ENCODE measurements at regions of chr3 and their contacts with region 1.

Region 1: DNA sequence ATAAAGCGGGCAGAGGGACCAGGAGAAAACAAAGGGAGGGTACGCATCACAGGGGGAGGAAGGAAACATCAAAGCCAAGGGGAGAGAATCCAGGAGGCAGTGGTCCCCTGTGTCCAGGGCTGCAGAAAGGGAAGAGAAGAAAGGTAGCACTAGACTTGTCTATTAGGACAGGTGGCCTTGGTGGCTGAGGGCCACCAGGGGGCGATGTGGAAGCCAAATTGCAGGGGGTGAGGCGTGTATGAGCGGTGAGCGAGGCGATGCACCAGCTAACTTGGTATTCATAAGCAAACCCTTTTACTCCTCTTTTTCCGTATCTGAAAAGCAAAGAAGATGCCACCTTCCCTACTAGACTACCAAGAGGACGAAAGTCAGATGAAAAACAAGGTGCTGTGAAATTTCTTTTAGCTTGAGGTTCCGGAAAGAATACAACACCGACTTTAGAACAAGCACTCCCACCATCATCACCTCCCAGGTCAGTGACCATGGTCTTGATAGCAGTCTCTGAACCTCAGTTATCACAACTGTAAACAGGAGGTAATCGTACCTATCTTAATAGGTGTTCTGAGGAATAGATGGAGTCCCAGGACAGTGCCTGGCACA is 654.4 kb upstream of the ADAMTS9 start:
- DNase-seq: peak; percentile 60
- H3K4me3 ChIP-seq: no peak overlapping the region
- H3K27ac ChIP-seq: no peak overlapping the region
- H3K4me1 ChIP-seq: no peaks in the 10 kb centered on the region
- H3K27me3 ChIP-seq: peaks cover 0 to 2% of the 10 kb centered on the region in 2 experiments
- CTCF ChIP-seq: peak; percentile 83 to 90
- POLR2A ChIP-seq: no peak

Region 2: GRCh38 chr3:65391068-65391467 is 48.9 kb after region 1 on chr3:
- CTCF ChIA-PET with region 1: no interaction called
- POLR2A ChIA-PET with region 1: no interaction called
- dilution Hi-C with region 1: no loop called
- intact Hi-C with region 1: no loop called
- DNase-seq: no peak
- H3K4me3 ChIP-seq: no peak overlapping the region
- H3K27ac ChIP-seq: no peak overlapping the region
- H3K4me1 ChIP-seq: no peaks in the 10 kb centered on the region
- H3K27me3 ChIP-seq: no peaks in the 10 kb centered on the region
- CTCF ChIP-seq: no peak
- POLR2A ChIP-seq: no peak

Region 3: GRCh38 chr3:65412588-65412987 is 70.4 kb after region 1 on chr3:
- CTCF ChIA-PET with region 1: interaction called, 5 read pairs
- POLR2A ChIA-PET with region 1: no interaction called
- dilution Hi-C with region 1: no loop called
- intact Hi-C with region 1: loop called (anchors 1 kb)
- DNase-seq: peak; percentile 18
- H3K4me3 ChIP-seq: no peak overlapping the region
- H3K27ac ChIP-seq: no peak overlapping the region
- H3K4me1 ChIP-seq: peaks cover 28% of the 10 kb centered on the region
- H3K27me3 ChIP-seq: no peaks in the 10 kb centered on the region
- CTCF ChIP-seq: no peak
- POLR2A ChIP-seq: no peak

Region 4: GRCh38 chr3:65575373-65575840 is 233.2 kb after region 1 on chr3:
- CTCF ChIA-PET with region 1: no interaction called
- POLR2A ChIA-PET with region 1: no interaction called
- dilution Hi-C with region 1: no loop called
- intact Hi-C with region 1: no loop called
- DNase-seq: peak; percentile 12
- H3K4me3 ChIP-seq: no peak overlapping the region
- H3K27ac ChIP-seq: no peak overlapping the region
- H3K4me1 ChIP-seq: no peaks in the 10 kb centered on the region
- H3K27me3 ChIP-seq: no peaks in the 10 kb centered on the region
- CTCF ChIP-seq: no peak
- POLR2A ChIP-seq: no peak

Region 5: GRCh38 chr3:65672871-65673815 is 331.0 kb after region 1 on chr3:
- CTCF ChIA-PET with region 1: interaction called, 10 read pairs
- POLR2A ChIA-PET with region 1: no interaction called
- dilution Hi-C with region 1: no loop called
- intact Hi-C with region 1: loop called (anchors 5 kb)
- DNase-seq: peak; percentile 50
- H3K4me3 ChIP-seq: no peak overlapping the region
- H3K27ac ChIP-seq: no peak overlapping the region
- H3K4me1 ChIP-seq: no peaks in the 10 kb centered on the region
- H3K27me3 ChIP-seq: no peaks in the 10 kb centered on the region
- CTCF ChIP-seq: peak; percentile 73 to 85
- POLR2A ChIP-seq: no peak

Region 6: DNA sequence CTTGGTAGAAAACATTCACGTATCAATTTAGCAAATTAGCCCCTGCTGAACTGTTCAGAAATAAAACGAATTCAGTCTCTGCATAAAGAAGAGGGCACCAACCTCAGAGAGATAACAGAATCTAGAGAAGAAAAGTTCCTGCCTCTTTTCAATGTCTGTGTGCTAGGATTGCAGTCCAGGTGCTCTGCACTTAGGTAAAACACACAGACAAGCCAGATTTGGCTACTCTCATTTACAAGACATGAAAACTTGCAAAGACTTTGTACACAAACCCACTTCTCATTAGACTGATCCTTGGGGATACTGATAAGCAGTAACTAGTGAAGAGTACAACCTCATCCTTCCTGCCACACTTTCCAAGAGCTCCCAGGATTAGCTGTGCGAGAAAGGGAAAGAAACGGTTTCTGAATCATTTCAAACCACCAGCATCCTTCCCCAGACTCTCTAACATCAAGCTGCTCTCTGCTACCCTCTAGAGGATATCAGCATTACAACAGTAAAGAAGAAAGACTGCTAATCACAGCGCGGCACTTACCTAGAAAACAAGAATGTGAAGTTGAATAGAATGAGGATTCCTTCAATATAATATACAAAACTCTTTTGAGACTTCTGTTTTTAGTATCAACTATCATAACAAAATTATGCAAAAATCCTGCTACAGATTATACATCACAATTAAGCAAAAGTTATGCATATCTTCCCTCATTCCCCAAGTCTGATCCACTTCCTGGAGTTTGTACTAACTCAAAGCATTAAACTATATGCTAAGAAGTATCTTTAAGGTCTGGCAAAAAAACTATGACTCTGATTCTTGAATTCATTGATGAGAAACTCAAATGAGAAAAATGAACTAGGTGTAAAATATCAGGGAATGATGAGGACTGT is 390.1 kb after region 1 on chr3:
- CTCF ChIA-PET with region 1: interaction called, 8 read pairs
- POLR2A ChIA-PET with region 1: no interaction called
- dilution Hi-C with region 1: no loop called
- intact Hi-C with region 1: loop called (anchors 1 kb)
- DNase-seq: peak; percentile 73
- H3K4me3 ChIP-seq: no peak overlapping the region
- H3K27ac ChIP-seq: no peak overlapping the region
- H3K4me1 ChIP-seq: no peaks in the 10 kb centered on the region
- H3K27me3 ChIP-seq: no peaks in the 10 kb centered on the region
- CTCF ChIP-seq: peak; percentile 71 to 74
- POLR2A ChIP-seq: no peak

Region 7: DNA sequence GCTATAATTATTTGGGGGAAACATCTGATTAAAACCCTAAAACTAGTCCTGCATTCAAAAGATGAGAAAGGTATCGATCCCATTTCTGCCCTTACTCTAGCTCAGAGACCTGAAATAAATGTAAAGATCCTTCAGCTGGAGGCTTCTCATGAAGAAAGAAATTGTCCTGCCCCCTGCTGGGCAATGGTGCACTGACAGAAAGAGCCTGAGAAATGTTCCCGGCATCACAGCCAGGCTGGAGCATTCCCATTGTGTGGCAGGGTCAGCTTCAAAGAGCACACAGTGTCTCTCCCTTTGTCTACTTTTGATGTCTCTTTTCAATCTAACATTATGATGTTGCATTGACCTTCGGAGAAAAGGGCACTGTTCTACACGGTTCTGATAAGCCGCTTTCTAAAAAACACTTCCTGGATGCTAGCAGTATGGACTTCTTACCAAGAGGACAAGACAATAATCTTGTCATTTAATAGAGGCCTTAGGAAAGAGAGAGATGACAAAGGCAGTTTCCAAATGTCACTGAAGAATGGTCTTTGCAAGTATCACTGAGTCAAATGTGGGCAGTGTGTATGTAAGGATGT is 409.0 kb after region 1 on chr3:
- CTCF ChIA-PET with region 1: interaction called, 9 read pairs
- POLR2A ChIA-PET with region 1: no interaction called
- dilution Hi-C with region 1: no loop called
- intact Hi-C with region 1: loop called (anchors 1 kb)
- DNase-seq: peak; percentile 52
- H3K4me3 ChIP-seq: no peak overlapping the region
- H3K27ac ChIP-seq: no peak overlapping the region
- H3K4me1 ChIP-seq: no peaks in the 10 kb centered on the region
- H3K27me3 ChIP-seq: no peaks in the 10 kb centered on the region
- CTCF ChIP-seq: peak; percentile 76 to 79
- POLR2A ChIP-seq: no peak

Region 8: DNA sequence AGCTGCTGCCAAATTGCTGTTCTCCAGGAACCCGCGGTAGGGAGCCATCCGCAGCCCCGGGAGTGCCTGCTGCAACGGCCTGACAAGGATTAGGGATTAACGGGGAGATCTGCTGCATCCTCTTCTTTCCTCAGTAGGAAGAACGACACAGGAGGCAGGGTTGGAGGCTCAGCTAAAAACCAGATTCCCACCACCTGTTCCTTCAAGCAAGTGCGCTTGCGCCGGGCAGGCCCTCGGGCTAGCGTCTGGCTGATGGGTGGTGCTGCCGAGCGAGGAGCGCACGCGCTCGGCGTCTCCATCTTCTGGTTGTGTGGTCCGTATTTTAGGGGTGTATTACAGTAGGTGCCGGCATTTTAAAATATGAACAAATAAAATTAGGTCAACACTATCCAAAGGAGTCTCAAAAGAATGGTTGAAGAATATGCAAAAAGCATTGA is 853.2 kb after region 1 on chr3:
- CTCF ChIA-PET with region 1: interaction called, 6 read pairs
- POLR2A ChIA-PET with region 1: no interaction called
- dilution Hi-C with region 1: no loop called
- intact Hi-C with region 1: loop called (anchors 5 kb)
- DNase-seq: peak; percentile 59
- H3K4me3 ChIP-seq: peak overlapping the region in 1 of 3 experiments; percentile 9
- H3K27ac ChIP-seq: no peak overlapping the region
- H3K4me1 ChIP-seq: peaks cover 3% of the 10 kb centered on the region
- H3K27me3 ChIP-seq: peaks cover 1 to 8% of the 10 kb centered on the region in 2 experiments
- CTCF ChIP-seq: peak; percentile 10 to 20
- POLR2A ChIP-seq: no peak